ENCODE measurements at regions of chr14 and their contacts with region 1.

Region 1: DNA sequence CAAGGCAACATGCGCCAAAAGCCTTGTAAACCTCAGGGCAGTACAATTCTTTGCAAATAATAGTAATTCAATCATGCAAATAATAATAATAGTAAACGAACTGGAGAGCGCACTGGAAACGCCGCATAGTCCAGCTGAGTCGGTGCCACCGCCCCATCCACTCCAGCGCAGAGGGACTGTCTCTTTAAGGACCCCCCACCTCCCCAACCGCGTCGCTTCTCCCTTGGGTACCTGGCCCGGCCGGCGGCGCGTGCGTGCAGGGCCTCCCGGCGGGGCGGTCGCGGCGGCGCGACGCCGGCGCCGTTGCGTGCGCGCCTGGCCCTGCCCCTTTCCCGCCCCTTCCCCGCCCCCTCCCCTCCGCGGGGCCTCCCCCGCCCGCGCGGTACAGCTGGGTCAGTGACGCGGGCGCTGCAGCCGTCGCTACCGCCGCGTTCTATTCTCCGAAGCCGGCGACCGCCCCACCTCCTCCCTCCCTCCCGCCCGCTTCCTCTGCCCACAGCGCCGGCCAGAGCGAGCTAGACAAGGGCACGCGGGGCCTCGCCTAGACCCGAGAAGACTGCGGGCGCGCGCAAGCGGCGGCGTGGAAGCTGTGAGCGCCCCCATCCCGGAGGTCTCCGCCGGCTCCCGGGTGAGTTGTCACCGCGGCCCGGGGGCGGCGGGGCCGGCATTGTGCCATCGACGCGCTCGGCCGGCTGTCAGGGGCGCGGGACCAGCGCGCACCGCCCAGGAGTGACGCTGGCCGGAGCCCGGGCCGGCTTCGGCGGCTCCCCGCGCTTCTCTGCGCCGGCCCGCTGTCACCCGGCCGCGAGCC is at the start of gene SUSD6:
- DNase-seq: peak; percentile 95
- H3K4me3 ChIP-seq: peak within 1 kb of the TSS; percentile 83 to 91 (median 91)
- H3K27ac ChIP-seq: peak within 1 kb of the TSS; percentile 97 to 100 (median 100)
- H3K4me1 ChIP-seq: peaks cover 46 to 55% (median 48%) of the 10 kb centered on the region in 4 donors
- H3K27me3 ChIP-seq: no peaks in the 10 kb centered on the region
- CTCF ChIP-seq: no peak
- EP300 ChIP-seq: no peak
- POLR2A ChIP-seq: peak; percentile 64
- total RNA-seq, gene SUSD6: 21.2 to 89.5 (median 43.5) TPM

Region 2: GRCh38 chr14:69574263-69574953 is 37.0 kb before region 1 on chr14 and contains the start of gene CCDC177:
- intact Hi-C with region 1: no loop called
- DNase-seq: no peak
- H3K4me3 ChIP-seq: peak within 1 kb of the TSS; percentile 17 to 62 (median 45)
- H3K27ac ChIP-seq: no peak within 1 kb of the TSS
- H3K4me1 ChIP-seq: peaks cover 28 to 43% (median 39%) of the 10 kb centered on the region in 4 donors
- H3K27me3 ChIP-seq: peaks cover 0 to 94% (median 54%) of the 10 kb centered on the region in 4 donors
- CTCF ChIP-seq: peak; percentile 62 to 79 (median 69)
- EP300 ChIP-seq: no peak
- POLR2A ChIP-seq: no peak
- total RNA-seq, gene CCDC177: not detected

Region 3: GRCh38 chr14:69648477-69649451 is 37.4 kb after region 1 on chr14:
- intact Hi-C with region 1: loop called (anchors 5 kb)
- DNase-seq: no peak
- H3K4me3 ChIP-seq: no peak overlapping the region
- H3K27ac ChIP-seq: peak overlapping the region; percentile 69 to 73 (median 72)
- H3K4me1 ChIP-seq: peaks cover 85 to 100% (median 90%) of the 10 kb centered on the region in 4 donors
- H3K27me3 ChIP-seq: no peaks in the 10 kb centered on the region
- CTCF ChIP-seq: no peak
- EP300 ChIP-seq: peak; percentile 30
- POLR2A ChIP-seq: no peak

Region 4: DNA sequence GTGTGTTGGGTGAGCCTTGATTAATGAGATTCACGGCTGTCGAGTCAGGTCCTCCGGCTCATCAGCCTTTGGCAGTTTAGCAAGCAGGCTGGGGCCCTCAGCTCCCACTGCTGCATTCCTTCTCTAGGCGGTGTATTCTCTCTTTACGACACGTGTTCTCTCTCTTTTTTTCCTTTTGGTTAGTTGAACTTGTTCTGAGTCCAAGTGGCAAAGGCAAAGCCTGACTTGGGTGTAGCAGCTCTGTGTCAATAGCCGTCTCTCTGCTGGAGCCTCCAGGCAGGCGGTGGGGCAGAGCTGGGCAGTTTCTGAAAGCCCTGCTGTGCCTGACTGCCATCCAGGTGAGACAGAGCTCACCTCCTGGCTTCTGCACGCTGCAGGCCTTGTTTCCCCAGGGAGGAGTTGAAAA is 46.5 kb after region 1 on chr14:
- intact Hi-C with region 1: loop called (anchors 5 kb)
- DNase-seq: no peak
- H3K4me3 ChIP-seq: peak overlapping the region in 1 of 4 donors; percentile 40
- H3K27ac ChIP-seq: peak overlapping the region; percentile 52 to 76 (median 64)
- H3K4me1 ChIP-seq: peaks cover 69 to 99% (median 87%) of the 10 kb centered on the region in 4 donors
- H3K27me3 ChIP-seq: no peaks in the 10 kb centered on the region
- CTCF ChIP-seq: no peak
- EP300 ChIP-seq: no peak
- POLR2A ChIP-seq: no peak

Region 5: GRCh38 chr14:69685716-69686115 is 74.3 kb after region 1 on chr14:
- intact Hi-C with region 1: no loop called
- DNase-seq: no peak
- H3K4me3 ChIP-seq: no peak overlapping the region
- H3K27ac ChIP-seq: peak overlapping the region; percentile 5 to 71 (median 60)
- H3K4me1 ChIP-seq: peaks cover 71 to 89% (median 78%) of the 10 kb centered on the region in 4 donors
- H3K27me3 ChIP-seq: no peaks in the 10 kb centered on the region
- CTCF ChIP-seq: no peak
- EP300 ChIP-seq: no peak
- POLR2A ChIP-seq: no peak

Region 6: GRCh38 chr14:69766984-69767368 is 155.6 kb after region 1 on chr14 and contains the start of gene SRSF5:
- intact Hi-C with region 1: loop called (anchors 5 kb)
- DNase-seq: peak; percentile 99
- H3K4me3 ChIP-seq: peak within 1 kb of the TSS; percentile 71 to 100 (median 91)
- H3K27ac ChIP-seq: peak within 1 kb of the TSS; percentile 98 to 100 (median 100)
- H3K4me1 ChIP-seq: peaks cover 41 to 48% (median 46%) of the 10 kb centered on the region in 4 donors
- H3K27me3 ChIP-seq: no peaks in the 10 kb centered on the region
- CTCF ChIP-seq: no peak
- EP300 ChIP-seq: no peak
- POLR2A ChIP-seq: peak; percentile 98
- total RNA-seq, gene SRSF5: 185 to 291 (median 211) TPM

Measured in esophagus muscularis mucosa (tissue), 4 donors.